Activated T-helper 1 cell treated with anti-CD3 and anti-CD28 coated beads, Interleukin-12 subunit alpha, Interleukin-12 subunit beta, Interleukin-2, Interleukin-4 antibody, amounts not matched to agents 30 ng/mL and 10 ng/mL and 1 ng/mL, durations not matched to agents 14 hours and 24 hours and 36 hours (primary cell): ENCODE measurements at regions of chr5 and their contacts with region 1.

Region 1: GRCh38 chr5:66828548-66829357 is 232.6 kb downstream of the MAST4 start:
- DNase-seq: peak; percentile 75
- H3K4me3 Mint-ChIP-seq: peak overlapping the region; percentile 94
- H3K27ac Mint-ChIP-seq: peak overlapping the region; percentile 96
- H3K4me1 Mint-ChIP-seq: peaks cover 90% of the 10 kb centered on the region
- H3K27me3 Mint-ChIP-seq: no peaks in the 10 kb centered on the region

Region 2: DNA sequence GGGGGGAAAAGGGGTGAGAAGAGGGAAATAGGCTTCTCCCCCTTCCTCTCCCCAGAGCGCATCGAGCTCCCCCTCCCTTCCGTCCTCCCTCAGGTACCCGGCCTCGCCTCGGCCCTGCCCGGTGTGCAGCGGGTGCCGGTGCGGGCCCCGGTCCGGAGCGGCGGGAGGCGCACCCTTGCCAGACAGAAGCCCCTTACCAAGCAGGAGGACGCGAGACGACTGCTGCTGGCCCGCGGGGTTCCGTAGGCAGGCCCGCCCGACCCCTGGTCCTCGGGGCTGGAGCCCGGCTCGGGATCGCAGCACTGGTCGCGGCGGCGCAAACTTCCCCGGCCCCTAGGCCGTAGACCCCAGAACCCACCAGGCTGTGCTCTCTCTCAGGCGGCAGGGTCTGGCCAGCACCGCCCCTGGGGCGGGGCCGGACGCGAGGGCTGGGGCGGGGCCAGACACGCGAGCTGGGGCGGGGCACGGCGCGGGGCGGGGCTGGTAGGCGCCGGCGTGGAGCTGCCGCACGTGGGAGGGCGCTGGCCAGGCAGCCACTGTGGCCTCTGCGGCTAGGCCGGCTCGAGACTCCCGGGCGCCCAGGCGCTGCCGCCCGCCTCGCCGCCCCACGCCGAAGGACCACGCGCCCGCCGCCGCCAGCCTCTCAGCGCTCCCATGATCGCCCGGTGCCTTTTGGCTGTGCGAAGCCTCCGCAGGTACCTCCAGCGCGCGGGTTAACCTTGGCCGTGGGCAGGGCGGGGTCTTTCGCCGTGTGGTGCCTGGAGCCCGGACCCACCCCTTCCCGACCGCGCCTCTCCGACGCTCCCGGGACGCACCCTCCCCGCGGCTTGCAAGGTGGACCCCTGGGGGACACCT is 1106.8 kb before region 1 on chr5 and contains the starts of genes NLN and SGTB:
- intact Hi-C with region 1: loop called (anchors 10 kb)
- DNase-seq: peak; percentile 81
- H3K4me3 Mint-ChIP-seq: peak within 1 kb of the TSS; percentile 95
- H3K27ac Mint-ChIP-seq: peak within 1 kb of the TSS; percentile 92
- H3K4me1 Mint-ChIP-seq: peaks cover 34% of the 10 kb centered on the region
- H3K27me3 Mint-ChIP-seq: no peaks in the 10 kb centered on the region
- total RNA-seq, gene NLN: 24.4 TPM in 2 replicates
- total RNA-seq, gene SGTB: 11.3 and 12.2 TPM in 2 replicates

Region 3: DNA sequence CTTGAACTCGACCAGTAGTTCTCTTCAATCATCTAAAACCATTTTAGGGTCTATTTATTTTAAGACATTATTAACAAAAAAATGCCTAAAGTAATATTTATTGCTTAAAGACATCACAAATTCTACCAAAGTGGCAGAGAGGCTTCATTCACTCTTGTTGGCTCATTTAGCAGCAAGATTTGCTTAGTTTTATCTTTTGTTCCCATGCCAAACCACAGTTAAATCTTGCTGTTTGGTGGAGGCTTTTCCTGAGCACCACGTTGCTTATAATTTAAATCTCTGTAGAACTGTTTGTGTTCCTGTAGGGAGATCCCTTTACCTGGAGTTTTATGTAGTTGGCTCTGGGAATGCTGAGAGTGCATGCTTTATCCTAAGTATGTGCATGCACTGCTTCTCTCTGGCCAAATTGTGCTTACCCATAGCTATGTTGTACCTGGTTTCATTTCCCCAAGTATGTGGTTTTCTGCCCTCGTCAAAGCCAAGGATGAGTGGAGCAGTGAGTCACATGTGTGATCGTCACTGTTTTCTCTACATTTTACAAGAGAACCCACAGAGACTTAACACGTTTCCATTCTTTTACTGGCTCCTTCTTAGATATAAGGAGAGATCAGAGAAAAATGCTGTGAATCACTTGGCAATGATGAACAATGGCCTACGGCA is 274.7 kb before region 1 on chr5:
- intact Hi-C with region 1: loop called (anchors 2 kb)
- DNase-seq: peak; percentile 50
- H3K4me3 Mint-ChIP-seq: no peak overlapping the region
- H3K27ac Mint-ChIP-seq: peak overlapping the region; percentile 26
- H3K4me1 Mint-ChIP-seq: peaks cover 32% of the 10 kb centered on the region
- H3K27me3 Mint-ChIP-seq: no peaks in the 10 kb centered on the region

Region 4: DNA sequence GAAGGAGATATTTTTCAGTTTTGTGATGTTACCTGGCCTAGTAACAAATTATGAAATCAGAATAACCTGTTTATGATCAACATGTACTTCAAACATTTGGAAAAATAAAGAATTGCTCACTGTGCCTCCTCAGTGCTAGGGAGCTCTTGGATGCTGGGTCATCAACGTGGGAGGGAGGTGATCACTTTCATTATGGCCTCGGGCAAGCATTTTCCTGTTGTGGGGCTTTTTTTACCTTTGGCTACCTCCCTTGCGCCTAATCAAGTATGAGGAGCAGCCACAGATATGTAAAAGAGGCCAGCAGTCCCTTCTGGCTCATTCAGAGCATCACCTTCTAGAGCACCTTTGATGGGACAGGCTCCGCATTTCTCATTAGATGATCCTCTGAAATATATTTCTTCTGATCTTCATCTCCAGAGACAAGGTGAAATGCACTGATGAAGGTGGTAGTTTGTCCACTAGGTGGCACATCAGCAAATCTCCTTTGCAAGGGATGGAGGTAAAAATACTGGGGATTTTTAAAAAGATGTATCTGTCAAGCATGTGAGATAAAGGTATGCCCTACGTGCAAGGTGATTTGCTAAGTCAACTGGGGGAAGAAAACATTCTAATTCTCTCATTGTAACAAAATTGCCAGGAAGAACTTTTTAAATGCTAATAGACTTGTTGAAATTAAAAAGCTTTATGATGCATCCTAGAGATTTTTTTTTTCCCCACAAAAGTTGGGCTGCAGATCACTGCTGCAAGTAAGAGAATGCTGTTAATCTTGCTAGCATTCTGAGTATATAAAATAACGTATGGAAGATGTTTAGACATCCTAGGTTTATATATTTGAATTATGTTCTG is 14.4 kb before region 1 on chr5:
- intact Hi-C with region 1: loop called (anchors 1 kb)
- DNase-seq: peak; percentile 47
- H3K4me3 Mint-ChIP-seq: peak overlapping the region; percentile 24
- H3K27ac Mint-ChIP-seq: no peak overlapping the region
- H3K4me1 Mint-ChIP-seq: peaks cover 78% of the 10 kb centered on the region
- H3K27me3 Mint-ChIP-seq: no peaks in the 10 kb centered on the region

Region 5: GRCh38 chr5:66945389-66946349 is 116.9 kb after region 1 on chr5:
- intact Hi-C with region 1: no loop called
- DNase-seq: no peak
- H3K4me3 Mint-ChIP-seq: no peak overlapping the region
- H3K27ac Mint-ChIP-seq: no peak overlapping the region
- H3K4me1 Mint-ChIP-seq: peaks cover 24% of the 10 kb centered on the region
- H3K27me3 Mint-ChIP-seq: peaks cover 2% of the 10 kb centered on the region

Region 6: GRCh38 chr5:67010684-67011409 is 182.1 kb after region 1 on chr5:
- intact Hi-C with region 1: no loop called
- DNase-seq: no peak
- H3K4me3 Mint-ChIP-seq: peak overlapping the region; percentile 15
- H3K27ac Mint-ChIP-seq: peak overlapping the region; percentile 64
- H3K4me1 Mint-ChIP-seq: peaks cover 92% of the 10 kb centered on the region
- H3K27me3 Mint-ChIP-seq: no peaks in the 10 kb centered on the region

Region 7: DNA sequence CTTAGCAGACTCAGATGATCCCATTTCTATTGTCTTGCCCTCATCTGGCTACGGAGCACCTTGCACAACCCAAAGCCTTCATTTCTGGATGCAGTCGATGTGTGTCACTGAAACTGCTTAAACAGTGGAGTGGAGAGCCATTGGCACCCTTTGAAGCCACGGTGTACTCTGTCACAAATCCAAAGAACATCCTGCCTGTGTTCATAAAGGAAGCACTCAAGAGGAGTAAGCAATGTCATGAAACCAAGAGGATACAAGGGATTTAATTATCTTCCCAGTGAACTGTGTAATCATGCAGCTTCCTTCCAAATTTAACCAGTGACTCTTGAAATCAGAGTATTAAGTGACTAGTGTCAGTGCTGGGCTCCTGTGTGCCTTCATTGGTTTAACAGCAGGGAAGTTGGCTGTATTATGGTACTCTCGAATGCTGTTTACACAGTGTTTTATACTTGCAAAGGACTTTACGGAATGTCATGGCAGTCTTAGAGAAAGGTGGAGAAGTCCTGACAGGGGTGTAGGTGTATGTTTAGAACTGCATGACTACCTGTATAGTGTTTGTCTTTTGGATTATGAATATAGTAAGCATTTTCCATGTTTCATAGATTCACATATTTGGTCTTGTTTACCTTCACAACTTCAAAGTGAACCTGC is 325.9 kb after region 1 on chr5:
- intact Hi-C with region 1: no loop called
- DNase-seq: no peak
- H3K4me3 Mint-ChIP-seq: no peak overlapping the region
- H3K27ac Mint-ChIP-seq: no peak overlapping the region
- H3K4me1 Mint-ChIP-seq: peaks cover 31% of the 10 kb centered on the region
- H3K27me3 Mint-ChIP-seq: no peaks in the 10 kb centered on the region

Region 8: DNA sequence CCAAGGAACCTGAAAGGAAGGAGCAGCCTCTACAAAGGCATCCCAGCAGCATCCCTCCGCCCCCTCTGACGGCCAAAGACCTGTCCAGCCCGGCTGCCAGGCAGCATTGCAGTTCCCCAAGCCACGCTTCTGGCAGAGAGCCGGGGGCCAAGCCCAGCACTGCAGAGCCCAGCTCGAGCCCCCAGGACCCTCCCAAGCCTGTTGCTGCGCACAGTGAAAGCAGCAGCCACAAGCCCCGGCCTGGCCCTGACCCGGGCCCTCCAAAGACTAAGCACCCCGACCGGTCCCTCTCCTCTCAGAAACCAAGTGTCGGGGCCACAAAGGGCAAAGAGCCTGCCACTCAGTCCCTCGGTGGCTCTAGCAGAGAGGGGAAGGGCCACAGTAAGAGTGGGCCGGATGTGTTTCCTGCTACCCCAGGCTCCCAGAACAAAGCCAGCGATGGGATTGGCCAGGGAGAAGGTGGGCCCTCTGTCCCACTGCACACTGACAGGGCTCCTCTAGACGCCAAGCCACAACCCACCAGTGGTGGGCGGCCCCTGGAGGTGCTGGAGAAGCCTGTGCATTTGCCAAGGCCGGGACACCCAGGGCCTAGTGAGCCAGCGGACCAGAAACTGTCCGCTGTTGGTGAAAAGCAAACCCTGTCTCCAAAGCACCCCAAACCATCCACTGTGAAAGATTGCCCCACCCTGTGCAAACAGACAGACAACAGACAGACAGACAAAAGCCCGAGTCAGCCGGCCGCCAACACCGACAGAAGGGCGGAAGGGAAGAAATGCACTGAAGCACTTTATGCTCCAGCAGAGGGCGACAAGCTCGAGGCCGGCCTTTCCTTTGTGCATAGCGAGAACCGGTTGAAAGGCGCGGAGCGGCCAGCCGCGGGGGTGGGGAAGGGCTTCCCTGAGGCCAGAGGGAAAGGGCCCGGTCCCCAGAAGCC is 337.0 kb after region 1 on chr5:
- intact Hi-C with region 1: loop called (anchors 5 kb)
- DNase-seq: peak; percentile 81
- H3K4me3 Mint-ChIP-seq: peak overlapping the region; percentile 91
- H3K27ac Mint-ChIP-seq: peak overlapping the region; percentile 94
- H3K4me1 Mint-ChIP-seq: peaks cover 79% of the 10 kb centered on the region
- H3K27me3 Mint-ChIP-seq: no peaks in the 10 kb centered on the region